Lower lobe of right lung (tissue), 2 donors: ENCODE measurements at regions of chr5 and their contacts with region 1.

Region 1: GRCh38 chr5:122415030-122415800 is 103.2 kb downstream of the SNCAIP start:
- DNase-seq: peak; percentile 44
- ATAC-seq: peak; percentile 82 to 93
- H3K4me3 ChIP-seq: no peak overlapping the region
- H3K27ac ChIP-seq: no peak overlapping the region
- H3K4me1 ChIP-seq: no peaks in the 10 kb centered on the region
- H3K27me3 ChIP-seq: no peaks in the 10 kb centered on the region
- CTCF ChIP-seq: peak; percentile 62

Region 2: GRCh38 chr5:122192497-122193496 is 222.4 kb before region 1 on chr5:
- intact Hi-C with region 1: loop called (anchors 10 kb)
- DNase-seq: no peak
- ATAC-seq: peak; percentile 78 to 81
- H3K4me3 ChIP-seq: no peak overlapping the region
- H3K27ac ChIP-seq: no peak overlapping the region
- H3K4me1 ChIP-seq: no peaks in the 10 kb centered on the region
- H3K27me3 ChIP-seq: no peaks in the 10 kb centered on the region
- CTCF ChIP-seq: peak; percentile 67